CD8-positive, alpha-beta T cell (primary cell): ENCODE measurements at regions of chr12 and their contacts with region 1.

Region 1: DNA sequence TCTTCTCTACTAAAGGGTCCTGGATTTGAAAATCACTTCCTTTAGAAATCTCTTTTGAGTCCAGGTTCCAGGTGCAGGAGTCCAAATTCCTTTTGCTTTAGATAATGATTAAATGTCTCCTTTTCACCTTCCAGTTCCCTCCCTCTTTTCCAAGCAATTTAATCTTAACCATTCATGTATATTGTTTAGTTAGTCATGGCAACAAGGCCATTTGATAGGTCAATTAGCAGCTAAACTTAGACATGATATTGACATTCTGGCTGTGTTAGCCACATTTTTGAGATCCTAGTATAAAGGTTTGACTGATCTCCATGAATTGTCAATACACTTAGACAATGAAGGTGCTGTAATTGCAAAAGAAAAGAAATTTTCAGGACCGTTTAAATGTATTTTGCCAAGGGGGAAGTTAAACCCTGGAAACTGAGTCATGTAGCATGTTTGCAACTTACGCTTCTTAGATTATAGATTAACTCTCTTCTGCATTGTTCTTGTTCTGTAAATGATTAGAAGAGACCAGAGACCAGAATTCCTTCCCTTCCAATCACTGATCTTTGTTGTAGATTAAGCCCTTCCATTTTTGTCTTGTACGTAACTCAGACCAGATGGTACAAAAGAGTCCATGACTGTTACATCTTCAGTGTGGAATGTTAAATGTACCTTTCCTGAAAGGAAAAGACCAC is 12.4 kb upstream of the C12orf75 start:
- DNase-seq: no peak
- ATAC-seq: no peak
- H3K4me3 ChIP-seq: no peak overlapping the region
- H3K4me3 Mint-ChIP-seq: no peak overlapping the region
- H3K27ac ChIP-seq: no peak overlapping the region
- H3K27ac Mint-ChIP-seq: no peak overlapping the region
- H3K4me1 ChIP-seq: peaks cover 4% of the 10 kb centered on the region
- H3K4me1 Mint-ChIP-seq: peaks cover 14% of the 10 kb centered on the region
- H3K27me3 ChIP-seq: no peaks in the 10 kb centered on the region
- H3K27me3 Mint-ChIP-seq: no peaks in the 10 kb centered on the region
- CTCF ChIP-seq: no peak

Region 2: GRCh38 chr12:103986829-103987228 is 1331.3 kb before region 1 on chr12:
- CTCF ChIA-PET with region 1: no interaction called
- POLR2A ChIA-PET with region 1: no interaction called
- intact Hi-C with region 1: no loop called
- DNase-seq: no peak
- ATAC-seq: no peak
- H3K4me3 ChIP-seq: no peak overlapping the region
- H3K4me3 Mint-ChIP-seq: no peak overlapping the region
- H3K27ac ChIP-seq: no peak overlapping the region
- H3K27ac Mint-ChIP-seq: no peak overlapping the region
- H3K4me1 ChIP-seq: no peaks in the 10 kb centered on the region
- H3K4me1 Mint-ChIP-seq: no peaks in the 10 kb centered on the region
- H3K27me3 ChIP-seq: no peaks in the 10 kb centered on the region
- H3K27me3 Mint-ChIP-seq: no peaks in the 10 kb centered on the region
- CTCF ChIP-seq: no peak

Region 3: DNA sequence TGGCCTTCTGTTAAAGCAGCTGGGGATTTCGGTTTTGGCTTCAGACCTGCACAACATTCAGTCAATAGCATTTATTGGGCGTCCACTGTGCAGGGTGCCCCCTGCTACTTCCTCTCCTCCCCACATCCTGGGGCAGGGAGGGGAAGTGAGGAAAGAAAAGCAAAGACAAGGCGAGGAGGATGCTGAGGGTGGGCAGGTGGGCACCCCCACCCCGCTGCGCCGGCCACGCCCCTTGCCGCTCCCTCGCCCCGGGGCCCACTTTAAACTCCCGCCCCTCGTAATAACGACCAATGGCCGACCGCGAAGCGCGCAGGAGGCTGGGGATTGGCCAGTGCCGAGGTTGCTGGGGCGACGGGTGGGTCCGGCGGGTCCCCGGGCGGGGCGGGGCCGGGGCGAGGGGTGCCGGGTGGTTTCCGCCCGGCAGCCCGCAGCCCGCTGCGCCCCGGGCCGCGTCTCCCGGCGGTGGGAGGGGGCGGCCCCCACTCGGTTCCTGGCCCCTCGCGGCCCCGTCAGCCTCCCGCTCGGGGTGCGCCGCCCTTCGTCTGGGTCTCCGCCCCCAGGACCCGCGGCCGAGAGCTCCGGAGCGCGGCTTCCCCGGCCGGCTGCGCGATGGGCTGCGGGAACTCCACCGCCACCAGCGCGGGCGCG is 12.3 kb after region 1 on chr12 and contains the start of gene C12orf75:
- CTCF ChIA-PET with region 1: interaction called, 23 read pairs
- POLR2A ChIA-PET with region 1: interaction called, 4 read pairs
- intact Hi-C with region 1: no loop called
- DNase-seq: peak; percentile 52 to 93 (median 85)
- ATAC-seq: peak; percentile 80
- H3K4me3 ChIP-seq: peak within 1 kb of the TSS; percentile 62 to 70
- H3K4me3 Mint-ChIP-seq: peak within 1 kb of the TSS; percentile 90
- H3K27ac ChIP-seq: peak within 1 kb of the TSS; percentile 48 to 74
- H3K27ac Mint-ChIP-seq: peak within 1 kb of the TSS; percentile 87
- H3K4me1 ChIP-seq: peaks cover 26% of the 10 kb centered on the region
- H3K4me1 Mint-ChIP-seq: peaks cover 60% of the 10 kb centered on the region
- H3K27me3 ChIP-seq: no peaks in the 10 kb centered on the region
- H3K27me3 Mint-ChIP-seq: no peaks in the 10 kb centered on the region
- CTCF ChIP-seq: no peak
- total RNA-seq, gene C12orf75: 27.5 to 27.9 TPM

Region 4: DNA sequence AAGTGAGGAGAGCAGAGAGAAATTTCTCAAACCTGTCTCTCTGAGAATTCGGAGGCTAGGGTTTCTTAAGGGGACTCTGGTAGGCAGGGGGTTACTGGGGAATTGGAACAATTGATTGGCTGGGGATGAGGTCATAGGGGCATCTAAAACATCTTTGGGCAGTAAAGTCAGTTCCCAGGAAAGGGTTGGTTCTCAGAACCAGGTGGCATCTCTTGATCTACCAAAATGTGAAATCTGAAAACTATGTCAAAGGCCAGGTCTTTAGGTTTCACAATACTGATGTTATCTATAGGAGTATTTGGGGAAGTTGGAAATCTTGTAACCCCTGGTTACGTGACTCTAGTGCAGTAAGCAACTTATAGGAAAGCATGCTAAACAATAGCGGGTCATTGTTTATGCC is 19.3 kb after region 1 on chr12:
- CTCF ChIA-PET with region 1: interaction called, 4 read pairs
- POLR2A ChIA-PET with region 1: no interaction called
- intact Hi-C with region 1: loop called in 1 of 2 experiments (anchors 2 kb)
- DNase-seq: no peak
- ATAC-seq: no peak
- H3K4me3 ChIP-seq: no peak overlapping the region
- H3K4me3 Mint-ChIP-seq: no peak overlapping the region
- H3K27ac ChIP-seq: no peak overlapping the region
- H3K27ac Mint-ChIP-seq: no peak overlapping the region
- H3K4me1 ChIP-seq: peaks cover 15% of the 10 kb centered on the region
- H3K4me1 Mint-ChIP-seq: peaks cover 50% of the 10 kb centered on the region
- H3K27me3 ChIP-seq: no peaks in the 10 kb centered on the region
- H3K27me3 Mint-ChIP-seq: no peaks in the 10 kb centered on the region
- CTCF ChIP-seq: no peak